ENCODE measurements at regions of chr20 and their contacts with region 1.

Region 1: DNA sequence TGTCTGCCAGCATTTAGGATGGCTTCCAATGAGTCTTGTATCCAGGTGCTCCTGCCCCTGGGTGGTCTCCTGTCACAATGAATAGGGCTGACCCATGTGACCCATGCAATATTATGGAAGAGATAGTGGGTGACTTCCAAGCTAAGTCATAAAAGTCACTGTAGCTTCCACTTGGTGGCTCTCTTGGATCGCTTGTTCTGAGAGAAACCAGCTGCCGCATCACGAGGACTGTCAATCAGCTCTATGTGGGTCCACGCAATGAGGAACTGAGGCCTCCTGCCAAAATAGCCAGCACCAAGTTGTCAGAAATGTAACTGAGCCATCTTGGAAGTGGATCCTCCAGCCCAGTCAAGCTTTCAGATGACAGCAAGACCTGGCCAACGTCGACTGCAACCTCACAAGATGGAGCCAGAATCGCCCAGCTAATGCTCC is 14.9 kb upstream of the MATN4 start:
- DNase-seq: no peak
- H3K4me3 Mint-ChIP-seq: no peak overlapping the region
- H3K27ac Mint-ChIP-seq: no peak overlapping the region
- H3K4me1 Mint-ChIP-seq: peaks cover 35% of the 10 kb centered on the region
- H3K27me3 Mint-ChIP-seq: peaks cover 9% of the 10 kb centered on the region

Region 2: GRCh38 chr20:45300961-45301360 is 22.0 kb before region 1 on chr20:
- CTCF ChIA-PET with region 1: interaction called, 31 read pairs
- DNase-seq: peak; percentile 58
- H3K4me3 Mint-ChIP-seq: no peak overlapping the region
- H3K27ac Mint-ChIP-seq: no peak overlapping the region
- H3K4me1 Mint-ChIP-seq: peaks cover 2% of the 10 kb centered on the region
- H3K27me3 Mint-ChIP-seq: peaks cover 58% of the 10 kb centered on the region

Region 3: GRCh38 chr20:45362804-45363610 is 40.0 kb after region 1 on chr20 and contains the start of gene SYS1:
- CTCF ChIA-PET with region 1: interaction called, 17 read pairs
- DNase-seq: peak; percentile 99
- H3K4me3 Mint-ChIP-seq: peak within 1 kb of the TSS; percentile 91
- H3K27ac Mint-ChIP-seq: peak within 1 kb of the TSS; percentile 91
- H3K4me1 Mint-ChIP-seq: peaks cover 54% of the 10 kb centered on the region
- H3K27me3 Mint-ChIP-seq: no peaks in the 10 kb centered on the region

Region 4: DNA sequence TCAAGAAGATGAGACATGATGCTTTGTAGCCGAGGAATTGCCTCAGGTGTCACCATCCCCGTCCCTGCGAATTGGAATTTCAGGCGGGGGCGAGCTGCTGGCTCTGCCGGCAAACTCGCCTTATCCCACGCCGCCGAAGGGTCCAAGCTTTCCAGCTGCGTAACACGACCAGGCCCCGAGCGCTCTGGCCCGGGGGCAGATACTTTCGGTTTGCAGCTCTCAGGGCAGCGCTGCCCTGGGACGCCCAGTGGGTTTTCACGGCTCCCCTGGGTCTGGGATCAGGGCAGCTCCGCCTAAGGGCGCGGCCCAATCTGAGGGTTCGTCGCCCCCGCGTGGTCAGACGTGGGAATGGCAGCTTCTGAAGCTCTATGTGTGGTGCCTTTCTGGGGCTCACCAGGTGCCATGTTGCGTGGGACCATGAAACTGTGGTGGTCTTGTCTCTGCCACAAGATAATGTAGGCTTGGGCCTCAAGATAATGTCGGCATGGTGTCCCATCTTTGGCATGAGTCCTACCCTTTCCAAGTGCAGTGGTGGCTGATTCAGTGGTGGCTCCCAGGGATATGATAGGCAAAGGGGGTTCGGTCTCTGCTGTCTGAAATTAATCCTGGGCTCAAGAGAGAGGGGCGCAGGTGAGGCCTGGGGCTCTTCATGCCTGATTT is 113.9 kb after region 1 on chr20:
- CTCF ChIA-PET with region 1: interaction called, 60 read pairs
- DNase-seq: peak; percentile 90
- H3K4me3 Mint-ChIP-seq: peak overlapping the region; percentile 73
- H3K27ac Mint-ChIP-seq: no peak overlapping the region
- H3K4me1 Mint-ChIP-seq: peaks cover 29% of the 10 kb centered on the region
- H3K27me3 Mint-ChIP-seq: peaks cover 7% of the 10 kb centered on the region

Region 5: GRCh38 chr20:45456632-45457031 is 133.7 kb after region 1 on chr20:
- CTCF ChIA-PET with region 1: interaction called, 14 read pairs
- DNase-seq: peak; percentile 69
- H3K4me3 Mint-ChIP-seq: no peak overlapping the region
- H3K27ac Mint-ChIP-seq: no peak overlapping the region
- H3K4me1 Mint-ChIP-seq: no peaks in the 10 kb centered on the region
- H3K27me3 Mint-ChIP-seq: peaks cover 15% of the 10 kb centered on the region

Region 6: GRCh38 chr20:45649312-45649863 is 326.4 kb after region 1 on chr20:
- CTCF ChIA-PET with region 1: no interaction called
- DNase-seq: no peak
- H3K4me3 Mint-ChIP-seq: no peak overlapping the region
- H3K27ac Mint-ChIP-seq: no peak overlapping the region
- H3K4me1 Mint-ChIP-seq: no peaks in the 10 kb centered on the region
- H3K27me3 Mint-ChIP-seq: peaks cover 8% of the 10 kb centered on the region